ENCODE measurements at regions of chr2 and their contacts with region 1.

Region 1: DNA sequence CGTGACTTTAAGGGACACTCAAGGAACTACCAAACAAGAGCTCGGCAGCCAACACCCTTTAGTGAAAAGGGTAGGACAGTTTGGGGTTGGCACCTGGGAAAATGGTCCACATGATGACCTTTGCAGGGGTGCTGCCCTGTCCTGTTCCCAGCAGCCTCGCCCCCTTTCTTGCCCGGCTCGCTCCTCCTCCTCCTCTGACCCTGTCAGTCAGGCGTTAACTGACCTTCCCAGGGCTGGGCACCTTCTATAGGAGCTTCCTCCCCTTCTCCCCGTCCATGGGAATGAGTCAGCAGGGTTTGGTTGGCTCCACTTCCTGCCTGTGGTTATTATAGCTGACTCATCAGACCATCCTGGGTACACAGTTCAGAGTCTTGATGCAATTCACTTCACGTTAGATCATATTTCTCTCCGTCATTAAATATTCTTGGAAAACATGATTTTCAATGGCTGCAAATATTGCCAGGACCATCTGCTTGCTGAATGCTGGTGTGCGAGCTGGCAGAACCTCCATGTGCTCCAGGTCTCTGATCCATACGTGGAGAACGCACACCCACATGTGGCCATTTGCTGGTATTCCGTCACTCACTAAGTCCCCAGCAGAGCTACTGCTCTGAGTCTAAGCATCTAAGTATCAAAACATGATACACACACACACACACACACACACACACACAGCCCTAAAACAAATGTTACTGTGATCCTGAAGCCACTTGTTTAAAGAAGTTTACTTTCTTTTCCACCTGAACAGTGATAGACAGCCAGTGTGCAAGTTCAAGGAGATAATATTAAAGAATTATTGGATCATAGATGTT is 185.0 kb downstream of the ANAPC1 start:
- DNase-seq: peak; percentile 70
- ATAC-seq: peak; percentile 84
- H3K4me3 Mint-ChIP-seq: peak overlapping the region; percentile 26
- H3K27ac Mint-ChIP-seq: peak overlapping the region; percentile 69
- H3K4me1 Mint-ChIP-seq: peaks cover 18% of the 10 kb centered on the region
- H3K27me3 Mint-ChIP-seq: peaks cover 9% of the 10 kb centered on the region
- CTCF ChIP-seq: no peak

Region 2: DNA sequence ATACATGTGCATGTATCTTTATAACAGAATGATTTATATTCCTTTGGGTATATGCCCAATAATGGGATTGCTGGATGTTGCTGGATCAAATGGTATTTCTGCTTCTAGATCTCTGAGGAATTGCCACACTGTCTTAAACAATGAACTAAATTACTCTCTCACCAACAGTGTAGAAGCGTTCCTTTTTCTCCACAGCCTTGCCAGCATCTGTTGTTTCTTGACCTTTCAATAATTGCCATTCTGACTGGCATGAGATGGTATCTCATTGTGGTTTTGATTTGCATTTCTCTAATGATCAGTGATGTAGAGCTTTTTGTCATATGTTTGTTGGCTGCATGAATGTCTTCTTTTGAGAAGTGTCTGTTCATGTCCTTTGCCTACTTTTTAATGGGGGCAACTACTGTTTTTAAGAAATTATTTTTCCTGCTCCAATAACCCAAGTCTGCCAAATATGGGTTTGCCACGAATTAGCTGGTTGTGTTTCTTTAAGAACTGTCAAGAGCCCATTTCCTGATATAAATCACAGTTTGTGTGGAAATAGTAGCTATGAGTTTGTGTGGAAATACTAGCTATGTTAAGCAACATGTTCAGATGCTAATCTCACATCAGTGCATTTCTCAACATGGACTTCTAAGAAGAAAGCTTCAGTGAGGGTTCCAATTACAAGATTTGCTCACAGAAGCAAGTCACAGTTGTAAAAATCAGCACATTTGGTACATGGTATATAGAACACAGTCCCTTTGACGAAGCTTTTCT is 74.4 kb before region 1 on chr2:
- CTCF ChIA-PET with region 1: interaction called, 3 read pairs
- POLR2A ChIA-PET with region 1: no interaction called
- intact Hi-C with region 1: loop called (anchors 10 kb)
- DNase-seq: no peak
- ATAC-seq: no peak
- H3K4me3 Mint-ChIP-seq: no peak overlapping the region
- H3K27ac Mint-ChIP-seq: no peak overlapping the region
- H3K4me1 Mint-ChIP-seq: peaks cover 23% of the 10 kb centered on the region
- H3K27me3 Mint-ChIP-seq: peaks cover 6% of the 10 kb centered on the region
- CTCF ChIP-seq: no peak

Region 3: DNA sequence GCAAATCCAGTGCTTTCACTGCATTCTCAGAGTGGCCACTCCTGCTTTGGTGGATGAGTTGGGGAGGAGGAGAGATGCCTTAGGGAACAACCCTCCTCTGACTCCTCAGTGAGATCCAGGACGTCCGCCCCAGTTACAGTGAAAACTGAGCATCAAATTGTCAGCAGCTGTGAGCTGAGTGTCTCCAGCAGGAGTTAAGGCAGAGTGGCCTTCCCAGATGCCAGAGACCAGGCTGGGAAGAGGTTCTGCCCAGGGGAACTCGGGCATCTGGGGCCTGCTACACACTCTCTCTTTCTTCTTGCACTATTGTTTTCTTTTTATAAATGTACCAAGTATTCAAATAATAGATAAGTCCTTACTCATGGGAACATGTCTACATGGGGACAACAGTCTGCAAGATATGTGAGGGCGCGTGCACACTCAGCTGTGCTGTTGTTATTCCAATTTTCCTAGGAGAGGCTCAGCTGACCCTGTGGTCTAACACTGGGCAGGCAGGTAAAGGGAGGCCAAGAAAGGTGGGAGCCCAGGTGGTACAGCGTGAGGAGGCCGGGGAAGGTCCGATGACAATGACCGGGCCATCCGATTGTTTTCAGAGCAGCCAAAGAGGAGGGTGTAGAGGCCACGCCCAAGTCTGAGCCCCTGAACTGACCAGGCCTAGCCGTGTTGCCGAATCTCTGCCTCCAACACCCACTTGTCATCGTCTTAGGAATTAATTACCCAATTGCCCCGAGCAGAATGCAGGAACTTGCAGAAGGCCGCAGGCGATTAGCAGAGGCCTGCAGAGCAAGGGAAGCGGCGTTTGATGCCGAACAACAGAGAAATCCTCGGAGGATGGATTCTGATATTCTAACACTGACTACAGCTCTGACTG is 18.2 kb after region 1 on chr2:
- CTCF ChIA-PET with region 1: no interaction called
- POLR2A ChIA-PET with region 1: no interaction called
- intact Hi-C with region 1: no loop called
- DNase-seq: no peak
- ATAC-seq: no peak
- H3K4me3 Mint-ChIP-seq: no peak overlapping the region
- H3K27ac Mint-ChIP-seq: no peak overlapping the region
- H3K4me1 Mint-ChIP-seq: peaks cover 4% of the 10 kb centered on the region
- H3K27me3 Mint-ChIP-seq: peaks cover 1% of the 10 kb centered on the region
- CTCF ChIP-seq: no peak